Activated CD4-positive, alpha-beta T cell treated with anti-CD3 and anti-CD28 coated beads for 36 hours (primary cell): ENCODE measurements at regions of chr2 and their contacts with region 1.

Region 1: GRCh38 chr2:191051825-191052778 is 38.1 kb upstream of the STAT1 start:
- DNase-seq: peak; percentile 26
- ATAC-seq: peak; percentile 71
- H3K4me3 Mint-ChIP-seq: no peak overlapping the region
- H3K27ac Mint-ChIP-seq: no peak overlapping the region
- H3K4me1 Mint-ChIP-seq: peaks cover 15% of the 10 kb centered on the region
- H3K27me3 Mint-ChIP-seq: no peaks in the 10 kb centered on the region

Region 2: DNA sequence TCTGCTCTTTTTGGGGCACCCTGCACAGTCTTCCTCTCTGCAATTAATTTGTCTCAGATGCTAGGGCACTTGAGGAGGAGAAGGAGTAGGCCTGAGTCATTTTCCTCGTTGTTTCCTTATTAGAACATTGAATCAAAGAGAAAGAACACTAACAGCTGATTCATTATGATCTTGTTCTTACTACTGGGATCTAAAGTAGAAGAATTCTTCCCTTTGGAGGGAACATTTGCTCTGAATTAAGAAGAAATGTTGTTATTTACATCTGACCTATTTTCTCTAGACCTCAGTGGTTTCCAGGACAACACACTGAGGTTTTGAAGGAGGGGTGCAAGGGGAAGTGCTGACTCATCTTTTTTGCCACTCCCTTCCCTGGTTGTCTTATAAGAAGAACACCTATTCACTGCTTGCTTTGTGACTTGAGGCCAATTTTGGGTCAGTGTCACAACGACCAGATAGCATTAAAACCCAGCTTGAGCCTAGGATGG is 13.8 kb before region 1 on chr2:
- CTCF ChIA-PET with region 1: interaction called, 35 read pairs
- POLR2A ChIA-PET with region 1: no interaction called
- intact Hi-C with region 1: no loop called
- DNase-seq: peak; percentile 43
- ATAC-seq: peak; percentile 85
- H3K4me3 Mint-ChIP-seq: no peak overlapping the region
- H3K27ac Mint-ChIP-seq: peak overlapping the region; percentile 44
- H3K4me1 Mint-ChIP-seq: peaks cover 34% of the 10 kb centered on the region
- H3K27me3 Mint-ChIP-seq: no peaks in the 10 kb centered on the region

Region 3: GRCh38 chr2:191078165-191078867 is 26.2 kb after region 1 on chr2:
- CTCF ChIA-PET with region 1: interaction called, 16 read pairs
- POLR2A ChIA-PET with region 1: interaction called, 3 read pairs
- intact Hi-C with region 1: no loop called
- DNase-seq: no peak
- ATAC-seq: peak; percentile 81
- H3K4me3 Mint-ChIP-seq: peak overlapping the region; percentile 64
- H3K27ac Mint-ChIP-seq: peak overlapping the region; percentile 83
- H3K4me1 Mint-ChIP-seq: peaks cover 20% of the 10 kb centered on the region
- H3K27me3 Mint-ChIP-seq: no peaks in the 10 kb centered on the region

Region 4: GRCh38 chr2:191114403-191114886 is 62.3 kb after region 1 on chr2:
- CTCF ChIA-PET with region 1: interaction called, 17 read pairs
- POLR2A ChIA-PET with region 1: no interaction called
- intact Hi-C with region 1: no loop called
- DNase-seq: peak; percentile 49
- ATAC-seq: peak; percentile 22
- H3K4me3 Mint-ChIP-seq: peak overlapping the region; percentile 30
- H3K27ac Mint-ChIP-seq: peak overlapping the region; percentile 82
- H3K4me1 Mint-ChIP-seq: peaks cover 62% of the 10 kb centered on the region
- H3K27me3 Mint-ChIP-seq: no peaks in the 10 kb centered on the region

Region 5: DNA sequence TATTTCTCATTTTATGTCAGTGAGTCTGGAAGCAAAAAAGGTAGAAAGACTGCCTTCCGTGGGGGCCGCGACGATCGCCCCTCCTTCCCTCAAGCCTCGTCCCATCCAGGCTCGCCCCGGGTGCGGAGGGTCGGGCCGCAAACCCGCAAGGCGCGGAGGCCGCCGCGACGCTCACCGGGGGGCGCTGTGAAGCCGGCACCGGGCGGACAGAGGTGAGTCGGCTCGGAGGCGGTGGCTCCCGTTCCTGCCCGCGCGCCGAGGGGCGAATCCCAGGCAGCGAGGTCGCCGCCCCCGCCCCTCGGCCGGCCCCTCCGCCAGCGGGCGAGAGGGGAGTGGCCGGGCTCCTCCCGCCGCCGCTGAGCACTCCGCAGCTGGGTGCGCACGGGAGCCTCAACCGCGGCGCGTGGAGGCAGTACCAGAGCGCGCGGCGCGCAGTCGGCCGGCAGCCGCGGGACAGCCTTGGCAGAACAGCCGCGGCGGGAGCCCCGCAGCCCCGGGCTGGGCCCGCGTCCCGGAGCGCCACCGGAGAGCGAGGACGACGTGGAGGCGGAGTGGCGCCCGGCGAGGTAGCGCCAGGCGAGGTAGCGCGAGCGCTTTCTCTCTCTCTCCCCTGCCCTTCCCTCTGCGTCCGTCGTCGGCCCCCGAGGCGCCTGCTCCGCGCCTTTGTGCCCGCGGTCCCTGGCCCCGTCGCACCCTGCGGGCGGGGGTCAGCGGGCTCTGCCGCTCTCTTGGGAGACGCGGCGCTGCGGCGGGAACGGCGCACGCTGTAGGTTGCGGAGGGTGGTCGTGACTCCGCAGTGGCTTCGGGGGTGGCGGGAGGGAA is 193.2 kb after region 1 on chr2 and contains the start of gene MYO1B:
- CTCF ChIA-PET with region 1: interaction called, 6 read pairs
- POLR2A ChIA-PET with region 1: no interaction called
- intact Hi-C with region 1: loop called in 1 of 2 experiments (anchors 5 kb)
- DNase-seq: peak; percentile 81
- ATAC-seq: peak; percentile 84
- H3K4me3 Mint-ChIP-seq: peak within 1 kb of the TSS; percentile 79
- H3K27ac Mint-ChIP-seq: peak within 1 kb of the TSS; percentile 80
- H3K4me1 Mint-ChIP-seq: peaks cover 20% of the 10 kb centered on the region
- H3K27me3 Mint-ChIP-seq: peaks cover 20% of the 10 kb centered on the region
- total RNA-seq, gene MYO1B: 29.7 to 36.7 TPM

Region 6: DNA sequence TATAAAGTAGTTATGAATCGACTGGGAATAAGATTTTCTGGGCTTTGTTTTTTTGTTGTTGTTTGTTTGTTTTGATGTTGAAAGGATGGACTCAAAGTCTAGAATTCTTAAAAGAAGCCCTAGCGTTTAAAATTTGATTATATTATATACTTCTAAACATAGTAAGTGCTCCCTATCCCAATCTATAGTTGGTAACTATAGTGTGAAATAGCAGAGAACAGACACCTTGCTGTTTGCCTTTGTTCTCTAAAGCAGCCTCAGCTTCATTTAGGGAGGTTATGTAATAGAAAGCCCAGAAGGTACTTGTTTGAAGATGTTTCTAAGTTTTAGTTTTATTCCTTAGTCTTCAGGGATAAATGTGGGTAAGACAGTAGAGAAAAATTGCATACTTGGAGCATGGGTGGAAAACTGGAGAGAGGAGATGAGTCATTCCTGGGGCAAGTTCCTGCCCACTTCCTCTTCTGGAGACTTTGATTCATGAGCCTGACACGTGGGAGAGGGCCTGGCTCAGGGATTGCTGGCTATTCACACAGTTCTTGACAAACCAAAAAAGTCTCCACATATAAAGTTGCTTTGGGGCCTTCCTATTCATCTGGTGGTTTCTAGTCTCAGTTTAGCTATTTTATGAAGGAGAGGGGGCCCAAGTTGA is 325.0 kb after region 1 on chr2:
- CTCF ChIA-PET with region 1: no interaction called
- POLR2A ChIA-PET with region 1: no interaction called
- intact Hi-C with region 1: loop called in 1 of 2 experiments (anchors 5 kb)
- DNase-seq: peak; percentile 39
- ATAC-seq: peak; percentile 65
- H3K4me3 Mint-ChIP-seq: no peak overlapping the region
- H3K27ac Mint-ChIP-seq: no peak overlapping the region
- H3K4me1 Mint-ChIP-seq: peaks cover 5% of the 10 kb centered on the region
- H3K27me3 Mint-ChIP-seq: peaks cover 2% of the 10 kb centered on the region